Activated B cell treated with CpG ODN at 0.5 μM for 24 hours (primary cell): ENCODE measurements at regions of chr12 and their contacts with region 1.

Region 1: GRCh38 chr12:15151161-15152120 is 69.8 kb downstream of the RERG start:
- DNase-seq: no peak
- ATAC-seq: no peak
- H3K4me3 Mint-ChIP-seq: no peak overlapping the region
- H3K27ac Mint-ChIP-seq: no peak overlapping the region
- H3K4me1 Mint-ChIP-seq: no peaks in the 10 kb centered on the region
- H3K27me3 Mint-ChIP-seq: no peaks in the 10 kb centered on the region
- CTCF ChIP-seq: no peak

Region 2: DNA sequence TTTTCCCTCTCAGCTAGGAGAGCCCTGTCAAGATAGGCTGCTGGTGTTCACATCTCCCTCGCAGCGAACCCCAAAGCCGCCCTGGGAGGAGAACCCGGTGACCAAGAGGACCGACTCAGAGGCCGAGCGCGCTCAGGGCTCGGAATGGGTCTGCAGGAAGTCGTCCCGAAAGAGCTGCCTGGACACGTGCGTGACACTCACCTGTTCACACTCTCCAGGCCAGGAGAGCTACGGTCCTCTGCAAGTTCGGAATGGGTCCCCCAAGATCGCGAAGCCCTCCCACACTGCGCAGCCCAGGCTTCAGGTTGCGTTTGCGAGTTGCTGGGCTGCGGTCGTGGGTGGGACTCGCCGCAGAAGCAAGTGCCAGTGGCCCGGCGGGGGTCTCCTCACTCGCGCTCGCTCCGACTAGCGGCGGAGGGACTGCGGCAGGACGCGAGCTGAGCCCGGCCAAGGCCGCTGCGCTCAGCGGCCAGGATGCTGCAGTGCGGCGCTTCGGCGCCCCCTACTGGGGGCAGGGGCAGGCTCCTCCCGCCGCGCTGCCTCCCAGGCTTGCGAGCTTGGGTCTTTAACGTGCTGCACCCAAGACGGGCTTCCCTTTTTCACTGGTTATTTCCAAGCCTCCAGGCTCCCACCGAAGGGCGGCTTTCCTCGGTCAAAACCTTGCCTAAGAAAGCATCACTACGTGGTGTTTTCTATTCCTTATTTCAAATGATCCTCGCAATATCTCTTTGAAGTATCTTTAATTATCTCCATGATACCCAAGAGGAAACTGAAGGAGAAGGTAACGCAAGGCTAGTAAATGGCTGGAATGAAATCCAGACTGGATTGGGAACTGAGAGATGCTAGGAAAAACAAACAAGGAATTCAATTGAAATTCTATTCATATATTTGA is 69.8 kb after region 1 on chr12 and contains the start of gene RERG:
- CTCF ChIA-PET with region 1: interaction called, 3 read pairs
- POLR2A ChIA-PET with region 1: no interaction called
- intact Hi-C with region 1: loop called (anchors 2 kb)
- DNase-seq: peak; percentile 72
- ATAC-seq: peak; percentile 99
- H3K4me3 Mint-ChIP-seq: peak within 1 kb of the TSS; percentile 68
- H3K27ac Mint-ChIP-seq: no peak within 1 kb of the TSS
- H3K4me1 Mint-ChIP-seq: peaks cover 7% of the 10 kb centered on the region
- H3K27me3 Mint-ChIP-seq: peaks cover 33% of the 10 kb centered on the region
- CTCF ChIP-seq: peak; percentile 69
- total RNA-seq, gene RERG: not detected in 2 replicates

Region 3: GRCh38 chr12:15268927-15269552 is 117.6 kb after region 1 on chr12:
- CTCF ChIA-PET with region 1: interaction called, 3 read pairs
- POLR2A ChIA-PET with region 1: no interaction called
- intact Hi-C with region 1: loop called (anchors 5 kb)
- DNase-seq: no peak
- ATAC-seq: peak; percentile 62
- H3K4me3 Mint-ChIP-seq: no peak overlapping the region
- H3K27ac Mint-ChIP-seq: no peak overlapping the region
- H3K4me1 Mint-ChIP-seq: no peaks in the 10 kb centered on the region
- H3K27me3 Mint-ChIP-seq: peaks cover 5% of the 10 kb centered on the region
- CTCF ChIP-seq: peak; percentile 76